CD4-positive, alpha-beta T cell (primary cell): ENCODE measurements at regions of chr19 and their contacts with region 1.

Region 1: GRCh38 chr19:45016388-45017319 is 15.4 kb downstream of the RELB start:
- DNase-seq: peak; percentile 49 to 95 (median 64)
- ATAC-seq: peak; percentile 82
- H3K4me3 ChIP-seq: peak overlapping the region; percentile 13
- H3K4me3 Mint-ChIP-seq: peak overlapping the region; percentile 56
- H3K27ac ChIP-seq: peak overlapping the region; percentile 67 to 86
- H3K27ac Mint-ChIP-seq: peak overlapping the region; percentile 82
- H3K4me1 ChIP-seq: peaks cover 21% of the 10 kb centered on the region
- H3K4me1 Mint-ChIP-seq: peaks cover 13% of the 10 kb centered on the region
- H3K27me3 ChIP-seq: no peaks in the 10 kb centered on the region
- H3K27me3 Mint-ChIP-seq: no peaks in the 10 kb centered on the region
- CTCF ChIP-seq: peak; percentile 69

Region 2: GRCh38 chr19:45125926-45126493 is 109.4 kb after region 1 on chr19:
- CTCF ChIA-PET with region 1: no interaction called
- POLR2A ChIA-PET with region 1: no interaction called
- intact Hi-C with region 1: loop called in 1 of 2 experiments (anchors 2 kb)
- DNase-seq: peak; percentile 52 to 79 (median 62)
- ATAC-seq: peak; percentile 92
- H3K4me3 ChIP-seq: no peak overlapping the region
- H3K4me3 Mint-ChIP-seq: no peak overlapping the region
- H3K27ac ChIP-seq: no peak overlapping the region
- H3K27ac Mint-ChIP-seq: no peak overlapping the region
- H3K4me1 ChIP-seq: peaks cover 25% of the 10 kb centered on the region
- H3K4me1 Mint-ChIP-seq: peaks cover 31% of the 10 kb centered on the region
- H3K27me3 ChIP-seq: no peaks in the 10 kb centered on the region
- H3K27me3 Mint-ChIP-seq: no peaks in the 10 kb centered on the region
- CTCF ChIP-seq: peak; percentile 70

Region 3: DNA sequence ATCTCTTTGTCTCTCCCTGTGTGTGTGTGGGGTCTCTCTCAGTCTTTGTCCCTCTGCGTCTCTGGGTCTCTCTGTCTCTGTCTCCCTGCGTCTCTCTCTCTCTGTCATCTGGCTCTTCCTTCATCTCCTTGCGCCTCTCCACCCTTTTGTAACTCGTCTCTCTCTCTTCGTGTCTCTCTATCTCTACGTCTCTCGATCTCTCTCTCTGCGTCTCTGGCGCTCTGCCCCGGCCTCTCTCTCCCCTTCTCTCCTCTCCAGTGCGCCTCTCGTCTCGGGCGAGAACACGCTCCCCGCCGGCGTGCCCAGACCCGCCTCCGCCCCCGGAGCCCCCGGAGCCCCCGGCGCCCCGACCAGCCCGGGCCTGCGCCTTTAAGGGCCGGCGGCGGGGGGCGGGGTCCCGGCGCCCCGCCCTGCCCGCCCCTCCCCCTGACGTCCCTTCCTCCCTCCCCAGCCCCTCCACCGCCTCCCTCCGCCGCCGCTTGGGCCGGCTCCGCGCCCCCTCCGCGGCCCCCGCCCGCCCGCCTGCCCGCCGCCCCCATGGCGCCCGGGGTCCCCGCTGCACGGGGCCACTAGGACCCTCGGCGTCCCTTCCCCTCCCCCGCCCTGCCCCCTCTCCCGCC is 234.3 kb after region 1 on chr19 and contains the start of gene MARK4:
- CTCF ChIA-PET with region 1: no interaction called
- POLR2A ChIA-PET with region 1: no interaction called
- intact Hi-C with region 1: loop called in 1 of 2 experiments (anchors 1 kb)
- DNase-seq: peak; percentile 32 to 84 (median 52)
- ATAC-seq: peak; percentile 71
- H3K4me3 ChIP-seq: peak within 1 kb of the TSS; percentile 83
- H3K4me3 Mint-ChIP-seq: peak within 1 kb of the TSS; percentile 90
- H3K27ac ChIP-seq: no peak within 1 kb of the TSS
- H3K27ac Mint-ChIP-seq: peak within 1 kb of the TSS; percentile 72
- H3K4me1 ChIP-seq: peaks cover 56% of the 10 kb centered on the region
- H3K4me1 Mint-ChIP-seq: peaks cover 35% of the 10 kb centered on the region
- H3K27me3 ChIP-seq: no peaks in the 10 kb centered on the region
- H3K27me3 Mint-ChIP-seq: no peaks in the 10 kb centered on the region
- CTCF ChIP-seq: no peak
- total RNA-seq, gene MARK4: 18.1 to 19.8 TPM

Region 4: GRCh38 chr19:45340232-45340898 is 323.7 kb after region 1 on chr19 and contains the start of gene KLC3:
- CTCF ChIA-PET with region 1: no interaction called
- POLR2A ChIA-PET with region 1: no interaction called
- intact Hi-C with region 1: loop called in 1 of 2 experiments (anchors 2 kb)
- DNase-seq: peak in 12 of 14 experiments; percentile 7 to 70 (median 35)
- ATAC-seq: peak; percentile 53
- H3K4me3 ChIP-seq: no peak within 1 kb of the TSS
- H3K4me3 Mint-ChIP-seq: no peak within 1 kb of the TSS
- H3K27ac ChIP-seq: no peak within 1 kb of the TSS
- H3K27ac Mint-ChIP-seq: no peak within 1 kb of the TSS
- H3K4me1 ChIP-seq: peaks cover 16% of the 10 kb centered on the region
- H3K4me1 Mint-ChIP-seq: no peaks in the 10 kb centered on the region
- H3K27me3 ChIP-seq: peaks cover 38% of the 10 kb centered on the region in 2 experiments
- H3K27me3 Mint-ChIP-seq: peaks cover 45% of the 10 kb centered on the region
- CTCF ChIP-seq: no peak
- total RNA-seq, gene KLC3: not detected